Heart right ventricle (tissue), 16 donors: ENCODE measurements at regions of chr3 and their contacts with region 1.

Region 1: GRCh38 chr3:131381444-131382291 is at the start of gene NUDT16:
- DNase-seq: peak; percentile 100
- ATAC-seq: peak; percentile 99
- H3K4me3 ChIP-seq: peak within 1 kb of the TSS; percentile 53 to 88 (median 80)
- H3K27ac ChIP-seq: peak within 1 kb of the TSS; percentile 76 to 94 (median 90)
- H3K4me1 ChIP-seq: peaks cover 21 to 62% (median 54%) of the 10 kb centered on the region in 9 donors
- H3K27me3 ChIP-seq: no peaks in the 10 kb centered on the region
- CTCF ChIP-seq: peak in 1 of 9 donors; percentile 14
- total RNA-seq, gene NUDT16: 26.9 to 44.1 (median 38.6) TPM

Region 2: GRCh38 chr3:131033480-131034080 is 348.1 kb before region 1 on chr3:
- intact Hi-C with region 1: loop called in 2 of 10 experiments (anchors 5 to 10 kb)
- DNase-seq: no peak
- ATAC-seq: no peak
- H3K4me3 ChIP-seq: no peak overlapping the region
- H3K27ac ChIP-seq: no peak overlapping the region
- H3K4me1 ChIP-seq: no peaks in the 10 kb centered on the region
- H3K27me3 ChIP-seq: no peaks in the 10 kb centered on the region
- CTCF ChIP-seq: peak in 8 of 9 donors; percentile 57 to 80 (median 68)

Region 3: DNA sequence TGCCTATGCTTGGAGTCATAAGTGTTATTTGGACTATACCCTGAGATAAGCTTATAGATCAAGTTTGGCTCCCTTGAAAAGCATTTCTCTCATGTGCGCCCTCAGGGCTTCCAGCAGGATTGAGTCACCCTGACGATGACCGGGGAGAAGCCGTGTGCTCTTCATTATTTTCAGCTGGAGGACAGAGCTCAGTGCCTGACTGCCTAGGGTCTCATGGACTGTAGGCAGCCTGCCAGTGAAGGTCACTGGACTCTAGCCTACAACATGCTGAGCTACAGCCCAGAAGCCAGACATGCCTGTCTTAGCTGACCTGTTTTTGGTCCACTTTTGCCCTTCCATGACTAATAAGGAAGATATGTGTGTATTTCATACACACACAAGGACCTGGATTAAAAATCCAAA is 31.7 kb before region 1 on chr3:
- intact Hi-C with region 1: loop called in 1 of 10 experiments (anchors 2 kb)
- DNase-seq: peak; percentile 39 to 57
- ATAC-seq: peak; percentile 59 to 86 (median 78)
- H3K4me3 ChIP-seq: peak overlapping the region in 4 of 10 donors; percentile 2 to 11 (median 4)
- H3K27ac ChIP-seq: peak overlapping the region; percentile 19 to 85 (median 78)
- H3K4me1 ChIP-seq: peaks cover 5 to 56% (median 25%) of the 10 kb centered on the region in 9 donors
- H3K27me3 ChIP-seq: no peaks in the 10 kb centered on the region
- CTCF ChIP-seq: no peak

Region 4: GRCh38 chr3:131402391-131403039 is 20.8 kb after region 1 on chr3:
- intact Hi-C with region 1: no loop called
- DNase-seq: no peak
- ATAC-seq: peak in 2 of 8 donors; percentile 35 to 53
- H3K4me3 ChIP-seq: no peak overlapping the region
- H3K27ac ChIP-seq: peak overlapping the region in 1 of 10 donors; percentile 33
- H3K4me1 ChIP-seq: peaks cover 0 to 18% (median 3%) of the 10 kb centered on the region in 9 donors
- H3K27me3 ChIP-seq: no peaks in the 10 kb centered on the region
- CTCF ChIP-seq: no peak

Region 5: GRCh38 chr3:131470377-131470776 is 88.7 kb after region 1 on chr3:
- intact Hi-C with region 1: loop called in 1 of 10 experiments (anchors 10 kb)
- DNase-seq: no peak
- ATAC-seq: no peak
- H3K4me3 ChIP-seq: no peak overlapping the region
- H3K27ac ChIP-seq: no peak overlapping the region
- H3K4me1 ChIP-seq: peaks cover 0 to 10% (median 0%) of the 10 kb centered on the region in 9 donors
- H3K27me3 ChIP-seq: no peaks in the 10 kb centered on the region
- CTCF ChIP-seq: no peak

Region 6: GRCh38 chr3:131502530-131503245 is 121.0 kb after region 1 on chr3 and contains the start of gene MRPL3:
- intact Hi-C with region 1: loop called in 6 of 10 experiments (anchors 5 to 10 kb)
- DNase-seq: peak; percentile 84 to 85
- ATAC-seq: peak; percentile 95 to 98 (median 96)
- H3K4me3 ChIP-seq: peak within 1 kb of the TSS; percentile 71 to 90 (median 82)
- H3K27ac ChIP-seq: peak within 1 kb of the TSS; percentile 18 to 88 (median 76)
- H3K4me1 ChIP-seq: peaks cover 2 to 33% (median 21%) of the 10 kb centered on the region in 9 donors
- H3K27me3 ChIP-seq: peaks cover 0 to 7% (median 0%) of the 10 kb centered on the region in 7 donors
- CTCF ChIP-seq: peak in 1 of 9 donors; percentile 18
- total RNA-seq, gene MRPL3: 46.5 to 74.0 (median 51.2) TPM